PC-9 (cell line): ENCODE measurements at regions of chr15 and their contacts with region 1.

Region 1: DNA sequence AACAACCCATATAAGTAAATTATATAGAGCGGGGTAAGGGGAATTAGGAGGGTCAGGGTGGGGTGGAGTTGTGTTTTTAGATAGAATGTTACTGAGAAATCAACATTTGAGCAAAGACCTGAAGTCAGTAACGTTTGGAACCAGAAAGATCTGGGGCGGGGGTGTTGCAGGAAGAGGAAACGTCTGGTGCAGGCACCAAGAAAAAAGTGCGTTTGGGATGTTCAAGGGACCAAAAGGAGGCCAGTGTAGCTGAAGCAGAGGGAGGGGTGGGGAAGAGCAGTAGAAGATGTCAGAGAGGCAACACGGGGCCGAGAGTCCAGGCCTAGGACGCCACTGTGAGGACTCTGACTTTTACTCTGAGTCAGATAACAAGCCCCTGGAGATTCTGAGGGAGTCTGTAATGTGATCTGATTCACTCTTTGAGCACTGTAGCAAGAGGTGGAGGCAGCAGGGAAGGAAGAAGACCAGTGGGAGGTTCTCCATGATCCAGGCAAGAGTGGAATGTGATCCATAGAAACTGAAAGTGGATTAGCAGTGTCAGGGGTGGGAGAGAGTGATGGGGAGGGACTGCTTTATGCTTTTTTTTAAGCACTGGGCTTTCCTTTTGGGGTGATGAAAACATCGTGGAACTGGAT is 179.3 kb upstream of the CHRM5 start:
- DNase-seq: no peak
- H3K4me3 ChIP-seq: no peak overlapping the region
- H3K27ac ChIP-seq: no peak overlapping the region
- H3K4me1 ChIP-seq: no peaks in the 10 kb centered on the region
- H3K27me3 ChIP-seq: no peaks in the 10 kb centered on the region; the same call in 1 of the 2 replicates
- CTCF ChIP-seq: no peak

Region 2: GRCh38 chr15:33722005-33722672 is 66.9 kb before region 1 on chr15:
- CTCF ChIA-PET with region 1: no interaction called
- POLR2A ChIA-PET with region 1: no interaction called
- intact Hi-C with region 1: no loop called
- DNase-seq: no peak
- H3K4me3 ChIP-seq: no peak overlapping the region
- H3K27ac ChIP-seq: no peak overlapping the region
- H3K4me1 ChIP-seq: no peaks in the 10 kb centered on the region
- H3K27me3 ChIP-seq: no peaks in the 10 kb centered on the region
- CTCF ChIP-seq: no peak

Region 3: DNA sequence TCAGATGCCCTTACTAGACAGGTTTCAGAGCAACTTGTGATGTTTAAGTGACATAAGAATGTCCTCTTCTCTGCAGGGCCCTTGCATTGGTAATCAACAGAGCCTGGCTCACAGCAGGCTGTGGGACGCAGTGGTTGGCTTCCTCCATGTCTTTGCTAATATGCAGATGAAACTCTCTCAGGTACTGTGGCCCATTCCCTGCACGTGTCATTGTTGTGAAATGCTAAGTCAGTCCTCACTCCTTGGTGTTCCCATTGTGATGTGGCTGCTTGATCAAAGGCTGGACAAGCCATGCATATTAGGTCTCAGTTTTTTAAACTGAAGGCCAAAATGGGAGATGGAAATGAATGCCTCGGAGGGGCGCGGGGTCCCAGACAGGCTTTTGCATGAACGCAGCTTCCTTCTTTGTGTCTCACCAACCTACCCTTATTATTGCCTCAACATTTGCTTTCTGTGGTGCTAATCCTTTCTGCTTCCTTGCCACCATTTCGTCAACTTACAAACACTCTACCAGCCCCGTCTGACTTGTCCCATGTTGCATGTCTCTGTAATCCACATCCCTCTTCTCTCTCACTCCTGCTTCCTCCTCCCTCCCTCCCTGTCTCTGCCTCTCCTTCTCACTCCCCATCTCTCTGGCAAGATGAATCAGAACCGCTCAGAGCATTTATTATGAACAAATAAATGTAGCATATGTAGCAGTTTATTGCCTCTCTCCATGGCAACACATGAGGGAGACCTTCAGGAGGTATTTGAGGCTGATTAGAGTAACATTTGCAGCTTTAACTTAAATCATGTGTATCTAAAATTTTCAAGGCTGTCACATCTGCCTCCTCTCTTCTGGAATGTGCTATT is 46.1 kb after region 1 on chr15:
- CTCF ChIA-PET with region 1: interaction called, 13 read pairs
- POLR2A ChIA-PET with region 1: no interaction called
- intact Hi-C with region 1: no loop called
- DNase-seq: no peak
- H3K4me3 ChIP-seq: no peak overlapping the region
- H3K27ac ChIP-seq: no peak overlapping the region
- H3K4me1 ChIP-seq: no peaks in the 10 kb centered on the region
- H3K27me3 ChIP-seq: no peaks in the 10 kb centered on the region
- CTCF ChIP-seq: no peak